CD8-positive, alpha-beta memory T cell (primary cell): ENCODE measurements at regions of chr20 and their contacts with region 1.

Region 1: DNA sequence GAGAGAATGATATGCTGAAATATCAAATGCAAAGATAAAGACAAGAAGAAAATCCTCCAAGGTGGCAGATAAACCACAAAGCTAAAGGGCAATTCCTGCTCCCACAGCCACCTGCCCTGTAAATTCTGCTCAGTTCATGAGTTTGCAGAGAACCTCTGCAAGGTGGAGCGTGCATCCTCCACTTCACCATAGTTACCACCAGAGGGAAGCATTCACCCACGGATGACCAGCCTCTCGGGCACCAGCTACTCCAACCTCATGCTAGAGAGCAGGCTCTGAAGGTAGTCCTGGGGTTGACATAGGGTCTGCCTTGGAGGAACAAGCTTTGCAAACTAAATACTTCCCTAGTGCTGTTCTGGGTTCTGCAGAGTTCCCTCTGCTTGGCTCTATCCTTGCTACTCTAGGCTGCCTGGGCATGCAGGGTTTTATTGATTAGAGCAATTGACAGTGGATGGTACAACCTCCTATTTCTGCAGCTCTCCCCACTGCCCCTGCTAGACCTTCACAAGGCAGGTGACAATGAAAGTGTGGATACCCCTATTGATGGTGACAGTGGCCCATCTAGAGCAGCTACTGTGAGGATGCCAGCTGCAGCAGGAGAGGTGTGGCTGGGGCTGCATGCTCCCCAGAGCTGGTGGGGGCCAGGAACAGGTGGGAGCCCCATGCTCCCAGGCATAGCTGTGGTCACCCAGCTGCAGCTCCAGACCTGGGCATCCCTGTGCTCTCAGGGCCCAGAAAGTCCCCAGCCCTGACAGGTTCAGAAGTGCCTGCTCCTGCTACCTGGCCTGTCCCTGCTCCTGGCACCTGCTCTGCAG is 51.1 kb downstream of the GGTLC1 start:
- DNase-seq: peak; percentile 52 to 76 (median 61)
- H3K4me3 ChIP-seq: no peak overlapping the region
- H3K4me3 Mint-ChIP-seq: no peak overlapping the region
- H3K27ac ChIP-seq: no peak overlapping the region
- H3K27ac Mint-ChIP-seq: no peak overlapping the region
- H3K4me1 ChIP-seq: no peaks in the 10 kb centered on the region
- H3K4me1 Mint-ChIP-seq: peaks cover 0 to 6% (median 2%) of the 10 kb centered on the region in 3 donors
- H3K27me3 ChIP-seq: no peaks in the 10 kb centered on the region
- H3K27me3 Mint-ChIP-seq: peaks cover 0 to 6% of the 10 kb centered on the region in 2 donors

Region 2: DNA sequence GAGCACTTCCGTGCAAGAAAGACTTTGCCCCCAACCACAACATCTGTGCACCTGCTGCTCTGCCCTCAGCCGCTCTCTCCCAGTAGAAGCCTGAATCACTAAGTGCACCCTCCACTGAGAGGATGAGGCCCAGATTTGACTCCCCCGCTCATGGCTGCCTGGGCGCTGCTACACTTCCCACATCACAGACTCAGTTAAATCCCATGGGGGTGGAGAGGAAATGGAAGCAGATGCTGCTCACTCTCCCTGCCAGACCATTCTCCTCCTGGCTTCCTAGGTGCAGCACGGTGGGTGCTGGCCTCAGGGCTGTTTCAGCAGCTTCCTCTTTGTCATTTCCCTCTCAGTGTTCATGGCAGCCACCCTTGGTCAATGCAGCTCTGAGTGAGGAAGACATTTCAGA is 62.8 kb before region 1 on chr20:
- CTCF ChIA-PET with region 1: no interaction called
- POLR2A ChIA-PET with region 1: no interaction called
- DNase-seq: no peak
- H3K4me3 ChIP-seq: no peak overlapping the region
- H3K4me3 Mint-ChIP-seq: no peak overlapping the region
- H3K27ac ChIP-seq: no peak overlapping the region
- H3K27ac Mint-ChIP-seq: no peak overlapping the region
- H3K4me1 ChIP-seq: no peaks in the 10 kb centered on the region
- H3K4me1 Mint-ChIP-seq: peaks cover 0 to 2% (median 0%) of the 10 kb centered on the region in 3 donors
- H3K27me3 ChIP-seq: no peaks in the 10 kb centered on the region
- H3K27me3 Mint-ChIP-seq: peaks cover 9 to 49% of the 10 kb centered on the region in 2 donors

Region 3: DNA sequence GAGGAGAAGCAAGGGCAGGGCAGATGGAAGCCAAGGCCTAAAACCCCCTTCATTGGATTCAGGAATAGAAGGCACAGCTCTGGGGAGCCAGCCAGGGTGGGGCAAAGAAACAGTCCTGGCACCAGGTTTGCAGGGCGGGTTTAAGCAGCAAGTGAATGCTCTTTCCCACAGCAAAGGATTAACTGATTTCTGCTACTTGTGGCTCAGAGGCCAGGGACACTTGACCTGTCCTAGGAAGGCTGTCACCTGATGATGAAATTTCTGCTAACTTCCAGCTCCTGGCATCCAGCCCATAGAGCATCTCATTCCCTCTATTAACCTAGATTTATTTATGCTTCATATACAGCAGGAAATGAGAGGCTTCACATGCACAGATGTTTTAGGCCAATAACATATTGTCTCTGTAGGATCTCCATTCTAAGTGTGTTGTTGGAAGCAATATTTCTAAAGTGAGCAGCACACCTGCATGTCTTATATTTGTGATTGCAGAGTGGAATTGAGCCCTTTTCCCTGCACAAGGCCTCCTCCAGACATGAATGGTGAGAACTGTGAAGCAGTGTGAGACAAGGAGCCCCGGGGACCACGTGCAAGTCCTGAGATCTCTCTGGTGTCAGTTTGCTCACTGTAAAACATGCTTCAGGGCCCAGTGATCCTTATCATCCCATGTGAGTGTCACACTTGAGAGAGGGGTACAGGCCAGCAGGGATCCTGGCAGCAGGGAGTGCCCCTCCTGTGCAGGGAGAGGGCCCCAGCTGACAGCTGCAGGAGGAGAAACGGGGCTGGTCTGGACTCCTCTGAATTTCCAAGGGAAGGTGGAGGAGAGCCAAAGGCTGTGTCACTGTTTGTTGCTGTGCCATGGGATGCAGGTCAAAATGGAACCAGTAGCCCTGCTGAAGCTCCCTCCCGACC is 16.8 kb before region 1 on chr20:
- CTCF ChIA-PET with region 1: interaction called, 11 read pairs
- POLR2A ChIA-PET with region 1: no interaction called
- DNase-seq: no peak
- H3K4me3 ChIP-seq: peak overlapping the region; percentile 37
- H3K4me3 Mint-ChIP-seq: peak overlapping the region in 6 of 7 donors; percentile 38 to 81 (median 63)
- H3K27ac ChIP-seq: peak overlapping the region; percentile 43
- H3K27ac Mint-ChIP-seq: peak overlapping the region; percentile 19 to 97 (median 91)
- H3K4me1 ChIP-seq: peaks cover 31% of the 10 kb centered on the region
- H3K4me1 Mint-ChIP-seq: peaks cover 36 to 64% (median 50%) of the 10 kb centered on the region in 3 donors
- H3K27me3 ChIP-seq: no peaks in the 10 kb centered on the region
- H3K27me3 Mint-ChIP-seq: peaks cover 4% of the 10 kb centered on the region in 2 donors

Region 4: GRCh38 chr20:24001712-24002405 is 64.3 kb after region 1 on chr20:
- CTCF ChIA-PET with region 1: interaction called, 10 read pairs
- POLR2A ChIA-PET with region 1: no interaction called
- DNase-seq: no peak
- H3K4me3 ChIP-seq: no peak overlapping the region
- H3K4me3 Mint-ChIP-seq: no peak overlapping the region
- H3K27ac ChIP-seq: no peak overlapping the region
- H3K27ac Mint-ChIP-seq: peak overlapping the region in 1 of 8 donors; percentile 22
- H3K4me1 ChIP-seq: no peaks in the 10 kb centered on the region
- H3K4me1 Mint-ChIP-seq: no peaks in the 10 kb centered on the region
- H3K27me3 ChIP-seq: no peaks in the 10 kb centered on the region
- H3K27me3 Mint-ChIP-seq: peaks cover 8 to 24% of the 10 kb centered on the region in 2 donors

Region 5: GRCh38 chr20:24100385-24101011 is 163.0 kb after region 1 on chr20:
- CTCF ChIA-PET with region 1: interaction called, 10 read pairs
- POLR2A ChIA-PET with region 1: no interaction called
- DNase-seq: peak; percentile 34 to 71 (median 50)
- H3K4me3 ChIP-seq: no peak overlapping the region
- H3K4me3 Mint-ChIP-seq: peak overlapping the region in 1 of 7 donors; percentile 1
- H3K27ac ChIP-seq: no peak overlapping the region
- H3K27ac Mint-ChIP-seq: peak overlapping the region in 3 of 8 donors; percentile 28 to 80 (median 32)
- H3K4me1 ChIP-seq: peaks cover 4% of the 10 kb centered on the region
- H3K4me1 Mint-ChIP-seq: peaks cover 4 to 7% (median 6%) of the 10 kb centered on the region in 3 donors
- H3K27me3 ChIP-seq: no peaks in the 10 kb centered on the region
- H3K27me3 Mint-ChIP-seq: peaks cover 5 to 28% of the 10 kb centered on the region in 2 donors

Region 6: DNA sequence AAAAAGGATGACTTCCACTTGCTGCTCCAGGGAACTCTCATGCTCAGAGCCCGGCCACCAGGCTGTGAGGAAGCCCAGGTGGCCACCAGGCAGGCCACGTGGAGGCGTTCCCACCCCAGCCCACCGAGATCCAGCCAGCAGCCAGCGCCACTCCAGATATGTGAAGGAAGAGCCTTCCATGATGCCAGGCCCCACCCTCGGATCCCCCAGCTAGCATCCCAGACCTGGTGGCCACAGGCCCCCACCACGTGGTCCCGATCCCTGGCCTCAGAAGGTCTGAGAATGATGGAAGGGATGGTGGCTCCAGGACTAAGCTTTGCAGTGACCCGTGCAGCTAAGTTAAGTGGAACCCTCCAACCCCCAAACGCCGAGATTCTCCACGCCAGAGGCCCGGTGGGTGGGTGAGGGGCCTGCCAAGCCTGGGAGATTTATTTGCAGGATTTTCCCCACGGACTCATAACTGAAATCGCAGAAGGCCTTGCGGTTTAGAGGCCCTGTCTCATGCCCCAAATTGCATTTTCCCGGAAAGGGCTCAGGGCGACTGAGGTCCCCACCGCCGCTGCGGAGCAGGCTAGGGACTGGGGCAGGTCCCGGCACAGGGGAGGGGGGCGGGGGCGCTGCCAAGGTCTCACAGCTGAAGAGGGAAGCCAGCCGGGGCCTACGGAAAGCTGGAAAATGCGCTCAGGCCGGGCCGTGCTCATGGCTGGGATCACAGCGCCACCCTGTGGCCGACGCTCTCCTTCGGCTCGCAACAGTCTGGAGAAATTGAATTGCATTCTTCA is 980.5 kb after region 1 on chr20:
- CTCF ChIA-PET with region 1: interaction called, 11 read pairs
- POLR2A ChIA-PET with region 1: no interaction called
- DNase-seq: peak; percentile 26 to 62 (median 29)
- H3K4me3 ChIP-seq: no peak overlapping the region
- H3K4me3 Mint-ChIP-seq: peak overlapping the region in 6 of 7 donors; percentile 1 to 61 (median 40)
- H3K27ac ChIP-seq: no peak overlapping the region
- H3K27ac Mint-ChIP-seq: peak overlapping the region in 3 of 8 donors; percentile 29 to 87 (median 33)
- H3K4me1 ChIP-seq: no peaks in the 10 kb centered on the region
- H3K4me1 Mint-ChIP-seq: peaks cover 2 to 11% (median 6%) of the 10 kb centered on the region in 3 donors
- H3K27me3 ChIP-seq: no peaks in the 10 kb centered on the region
- H3K27me3 Mint-ChIP-seq: peaks cover 8 to 26% of the 10 kb centered on the region in 2 donors